ENCODE measurements at regions of chr6 and their contacts with region 1.

Region 1: DNA sequence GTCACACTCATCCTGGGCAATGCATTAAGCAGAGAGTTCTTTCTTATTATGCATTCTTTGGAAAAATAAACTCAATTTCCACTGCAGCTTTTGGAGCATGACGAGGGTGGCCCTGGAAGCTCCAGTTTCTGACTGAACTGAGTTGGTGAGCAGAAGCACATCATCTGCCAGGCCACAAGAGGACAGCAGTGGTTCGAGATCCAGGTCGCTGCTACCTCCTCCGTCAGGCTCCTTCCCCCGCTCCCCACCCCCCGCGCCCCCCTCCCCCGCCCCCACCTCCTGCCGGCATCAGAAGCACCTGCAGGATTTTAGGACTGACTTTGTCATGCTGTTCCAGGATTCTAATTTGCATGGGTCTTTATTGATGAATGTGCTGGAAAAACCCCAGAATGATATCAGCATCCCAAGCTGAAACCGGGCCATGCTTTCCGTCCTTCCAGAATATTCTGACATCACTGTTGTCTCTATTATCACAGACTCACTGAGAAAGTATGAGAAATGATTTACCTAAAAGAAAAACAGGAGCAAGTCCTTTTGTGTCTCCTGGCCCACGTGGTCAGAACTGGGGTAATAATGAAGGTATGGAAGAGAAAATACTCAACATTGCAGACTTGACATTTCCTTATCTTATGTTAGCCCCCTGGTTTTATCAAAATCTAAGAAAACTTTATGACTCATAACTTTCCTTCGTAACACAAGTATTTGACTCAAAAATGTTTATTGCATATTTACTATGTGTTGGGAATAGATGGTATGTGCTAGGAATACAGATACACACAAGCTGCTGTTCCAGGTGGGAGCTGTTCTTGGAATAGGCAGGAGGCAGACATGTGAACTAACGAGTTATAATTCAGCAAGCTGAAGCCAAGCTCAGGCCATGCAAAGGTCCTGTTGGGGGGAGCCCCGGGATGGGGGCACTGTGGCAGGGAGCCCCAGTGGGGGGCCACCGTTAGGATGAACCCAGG is 220.2 kb upstream of the EXOC2 start:
- DNase-seq: peak in 4 of 6 donors; percentile 25 to 67 (median 38)
- ATAC-seq: peak; percentile 80 to 97 (median 94)
- H3K4me3 ChIP-seq: no peak overlapping the region
- H3K27ac ChIP-seq: no peak overlapping the region
- H3K4me1 ChIP-seq: no peaks in the 10 kb centered on the region
- H3K27me3 ChIP-seq: no peaks in the 10 kb centered on the region
- CTCF ChIP-seq: peak in 2 of 4 donors; percentile 32

Region 2: GRCh38 chr6:786946-787763 is 126.0 kb before region 1 on chr6:
- intact Hi-C with region 1: no loop called
- DNase-seq: peak in 1 of 6 donors; percentile 17
- ATAC-seq: peak in 3 of 4 donors; percentile 53 to 67 (median 59)
- H3K4me3 ChIP-seq: no peak overlapping the region
- H3K27ac ChIP-seq: no peak overlapping the region
- H3K4me1 ChIP-seq: no peaks in the 10 kb centered on the region
- H3K27me3 ChIP-seq: peaks cover 0 to 4% (median 0%) of the 10 kb centered on the region in 4 donors
- CTCF ChIP-seq: peak; percentile 23 to 56 (median 32)

Region 3: DNA sequence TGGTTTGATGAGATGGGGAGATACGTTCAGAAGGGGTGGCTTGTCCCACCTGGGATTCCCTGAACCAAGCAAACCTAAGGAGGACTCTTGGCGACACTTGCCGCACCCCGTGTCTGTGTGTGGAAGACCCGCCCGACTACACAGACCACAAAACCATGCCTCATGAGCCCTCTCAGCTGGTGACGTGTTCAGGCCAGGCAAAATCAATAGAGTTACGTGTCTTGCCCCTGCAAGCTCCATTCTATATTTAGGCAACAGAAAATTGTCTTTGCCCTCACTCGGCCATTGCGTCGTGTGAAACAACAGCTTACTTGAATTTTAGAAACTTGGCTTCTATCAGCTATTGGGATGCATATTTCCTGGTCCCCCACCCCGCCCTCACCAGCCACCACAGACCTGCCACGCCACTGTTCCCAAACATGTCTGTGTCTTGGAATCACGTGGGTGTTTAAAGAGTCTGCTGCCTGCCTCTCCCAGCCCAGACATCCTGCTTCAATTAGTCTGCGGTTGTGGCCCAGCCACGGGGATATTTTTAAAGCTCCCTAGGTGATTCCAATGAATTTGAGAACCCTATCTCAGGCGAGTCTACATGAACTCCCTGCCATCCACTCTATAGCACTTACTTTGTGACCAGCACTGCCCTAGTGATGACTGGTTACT is 59.0 kb after region 1 on chr6:
- intact Hi-C with region 1: no loop called
- DNase-seq: no peak
- ATAC-seq: no peak
- H3K4me3 ChIP-seq: no peak overlapping the region
- H3K27ac ChIP-seq: no peak overlapping the region
- H3K4me1 ChIP-seq: no peaks in the 10 kb centered on the region
- H3K27me3 ChIP-seq: no peaks in the 10 kb centered on the region
- CTCF ChIP-seq: no peak

Region 4: GRCh38 chr6:1325461-1326309 is 412.5 kb after region 1 on chr6:
- intact Hi-C with region 1: loop called in 1 of 3 experiments (anchors 10 kb)
- DNase-seq: peak in 1 of 6 donors; percentile 82
- ATAC-seq: peak; percentile 48 to 71 (median 61)
- H3K4me3 ChIP-seq: no peak overlapping the region
- H3K27ac ChIP-seq: no peak overlapping the region
- H3K4me1 ChIP-seq: no peaks in the 10 kb centered on the region
- H3K27me3 ChIP-seq: no peaks in the 10 kb centered on the region
- CTCF ChIP-seq: no peak

Region 5: GRCh38 chr6:1335367-1336037 is 422.3 kb after region 1 on chr6:
- intact Hi-C with region 1: loop called in 2 of 3 experiments (anchors 5 to 10 kb)
- DNase-seq: peak; percentile 64 to 89 (median 70)
- ATAC-seq: peak; percentile 90 to 95 (median 94)
- H3K4me3 ChIP-seq: no peak overlapping the region
- H3K27ac ChIP-seq: peak overlapping the region; percentile 35 to 74 (median 54)
- H3K4me1 ChIP-seq: peaks cover 5 to 16% (median 7%) of the 10 kb centered on the region in 3 donors
- H3K27me3 ChIP-seq: no peaks in the 10 kb centered on the region
- CTCF ChIP-seq: no peak

Region 6: DNA sequence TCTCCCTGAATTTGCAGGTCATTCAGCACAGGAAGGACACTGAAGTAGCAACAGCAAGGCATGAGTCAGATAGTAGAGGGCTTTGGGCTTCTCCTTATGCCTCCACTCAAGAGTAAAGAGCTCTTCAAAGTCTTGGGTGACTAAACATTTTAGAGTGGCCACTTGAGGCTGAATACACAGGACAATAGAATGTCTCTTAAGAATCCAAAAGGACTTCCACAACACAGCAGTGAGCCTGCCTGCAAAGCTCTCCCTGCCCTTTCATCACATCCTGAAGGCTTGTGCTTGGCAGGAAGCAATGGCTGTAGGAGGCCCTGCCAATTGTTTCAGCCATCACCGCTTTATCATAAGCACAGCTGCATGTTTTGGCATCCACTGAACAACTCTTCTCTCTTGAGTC is 435.5 kb after region 1 on chr6:
- intact Hi-C with region 1: loop called in 1 of 3 experiments (anchors 10 kb)
- DNase-seq: no peak
- ATAC-seq: no peak
- H3K4me3 ChIP-seq: no peak overlapping the region
- H3K27ac ChIP-seq: no peak overlapping the region
- H3K4me1 ChIP-seq: no peaks in the 10 kb centered on the region
- H3K27me3 ChIP-seq: peaks cover 0 to 2% (median 0%) of the 10 kb centered on the region in 4 donors
- CTCF ChIP-seq: no peak

Region 7: DNA sequence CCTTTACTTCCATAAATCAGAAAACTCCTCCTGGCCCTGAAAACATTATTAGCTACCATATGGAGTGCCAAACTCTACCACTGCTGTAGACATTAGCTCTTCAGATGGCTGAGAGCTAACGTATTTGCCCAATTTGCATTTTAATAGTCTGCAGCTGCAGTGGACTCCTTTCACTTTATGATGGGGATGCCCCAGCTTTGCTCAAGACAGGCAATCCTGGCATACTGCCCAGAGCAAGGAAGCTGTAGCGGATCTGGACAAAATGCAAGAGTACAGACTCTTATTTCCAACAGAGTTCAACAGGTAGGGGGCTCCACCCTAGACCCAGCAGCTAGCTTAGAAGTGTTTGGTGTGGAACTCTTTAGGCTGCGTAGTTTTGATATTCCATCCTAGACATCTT is 943.2 kb after region 1 on chr6:
- intact Hi-C with region 1: no loop called
- DNase-seq: no peak
- ATAC-seq: peak in 1 of 4 donors; percentile 30
- H3K4me3 ChIP-seq: no peak overlapping the region
- H3K27ac ChIP-seq: no peak overlapping the region
- H3K4me1 ChIP-seq: peaks cover 0 to 6% (median 5%) of the 10 kb centered on the region in 3 donors
- H3K27me3 ChIP-seq: no peaks in the 10 kb centered on the region
- CTCF ChIP-seq: no peak